Activated CD8-positive, alpha-beta T cell treated with anti-CD3 and anti-CD28 coated beads, Interleukin-2, amount 10 ng/mL, durations not matched to agents 7 days and 5 days (primary cell): ENCODE measurements at regions of chr1 and their contacts with region 1.

Region 1: GRCh38 chr1:235105051-235106043 is 23.3 kb downstream of the TOMM20 start:
- DNase-seq: peak; percentile 46
- ATAC-seq: peak; percentile 32
- H3K4me3 Mint-ChIP-seq: peak overlapping the region; percentile 66
- H3K27ac Mint-ChIP-seq: peak overlapping the region; percentile 79
- H3K4me1 Mint-ChIP-seq: peaks cover 46% of the 10 kb centered on the region
- H3K27me3 Mint-ChIP-seq: no peaks in the 10 kb centered on the region

Region 2: GRCh38 chr1:234486498-234487448 is 618.6 kb before region 1 on chr1:
- CTCF ChIA-PET with region 1: interaction called, 17 read pairs
- POLR2A ChIA-PET with region 1: no interaction called
- DNase-seq: peak; percentile 59
- ATAC-seq: peak; percentile 66
- H3K4me3 Mint-ChIP-seq: no peak overlapping the region
- H3K27ac Mint-ChIP-seq: no peak overlapping the region
- H3K4me1 Mint-ChIP-seq: peaks cover 31% of the 10 kb centered on the region
- H3K27me3 Mint-ChIP-seq: peaks cover 20% of the 10 kb centered on the region

Region 3: DNA sequence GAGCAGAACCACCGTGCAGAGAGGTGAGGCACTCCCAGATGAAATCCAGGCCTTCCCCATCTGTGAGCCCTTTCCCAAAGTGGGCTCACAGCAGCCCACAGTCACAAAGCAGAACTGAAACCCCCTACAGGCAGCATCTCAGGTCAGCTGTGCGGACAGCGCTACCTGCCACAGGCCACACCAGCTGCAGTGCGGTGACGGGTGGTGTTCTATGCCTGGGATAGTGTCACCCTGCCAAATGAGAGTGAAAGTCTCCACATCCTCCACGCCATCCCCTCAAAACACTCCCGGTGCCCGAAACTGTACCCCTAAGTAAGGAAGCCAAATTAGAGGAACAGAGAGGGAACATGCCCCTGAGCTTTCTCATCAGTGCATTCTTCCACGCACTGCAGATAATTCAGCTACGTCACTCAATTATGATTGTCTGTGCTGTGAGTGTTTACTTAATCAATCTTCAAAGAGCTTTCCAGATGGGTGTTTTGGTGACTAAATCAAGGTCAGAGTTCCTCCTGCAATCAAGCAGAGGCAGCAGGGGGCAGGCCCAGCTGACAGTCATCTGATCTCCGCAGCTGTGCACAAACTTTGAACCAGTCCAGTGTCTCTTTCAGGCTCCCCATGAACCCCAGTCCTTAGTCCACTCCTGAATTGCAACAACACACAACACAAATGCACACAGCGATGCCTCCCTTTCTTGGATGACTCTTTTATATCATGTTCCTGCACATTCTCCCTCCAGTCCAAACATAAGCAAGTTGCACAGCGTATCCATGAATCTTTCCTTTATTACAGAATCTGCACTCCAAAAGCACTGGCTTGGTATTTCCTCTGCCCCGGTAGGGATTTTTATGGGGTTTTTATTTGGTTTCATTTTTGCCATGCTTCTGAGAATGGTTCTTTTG is 126.7 kb before region 1 on chr1:
- CTCF ChIA-PET with region 1: no interaction called
- POLR2A ChIA-PET with region 1: no interaction called
- DNase-seq: peak; percentile 54
- ATAC-seq: peak; percentile 9
- H3K4me3 Mint-ChIP-seq: peak overlapping the region; percentile 5
- H3K27ac Mint-ChIP-seq: peak overlapping the region; percentile 91
- H3K4me1 Mint-ChIP-seq: peaks cover 72% of the 10 kb centered on the region
- H3K27me3 Mint-ChIP-seq: no peaks in the 10 kb centered on the region

Region 4: DNA sequence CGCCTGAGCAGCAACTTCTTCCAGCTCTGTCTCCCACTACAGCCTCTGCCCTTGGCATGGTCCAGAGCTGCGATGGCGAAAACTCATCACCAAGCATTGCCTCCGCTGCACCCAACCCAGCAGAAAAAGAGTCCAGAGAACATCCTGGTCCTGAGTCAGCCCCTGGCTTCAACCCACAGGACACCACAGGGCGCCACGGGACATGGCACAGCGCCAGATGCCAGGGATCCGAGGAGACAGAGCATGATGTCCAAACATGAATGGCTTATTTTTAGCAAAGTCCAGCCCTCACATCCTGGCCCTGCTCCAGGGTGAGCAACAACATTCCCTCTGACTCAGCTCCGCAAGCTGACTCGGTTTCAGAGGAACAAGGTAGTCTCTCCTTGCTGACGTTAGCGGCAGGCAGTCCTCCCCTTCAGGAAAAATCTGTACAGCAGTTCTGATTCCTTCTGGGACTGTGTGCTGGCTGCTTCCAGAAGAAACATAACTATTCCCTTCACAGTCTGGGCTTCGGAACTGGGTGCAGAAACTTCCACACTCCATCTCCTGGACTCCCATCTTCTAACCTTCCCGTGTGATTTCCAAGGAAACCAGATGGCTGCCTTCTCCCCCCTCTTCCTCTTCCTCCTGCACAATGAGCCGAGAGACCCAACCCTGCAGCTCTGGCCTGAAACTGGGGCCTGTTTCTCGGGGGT is 108.0 kb before region 1 on chr1:
- CTCF ChIA-PET with region 1: no interaction called
- POLR2A ChIA-PET with region 1: no interaction called
- DNase-seq: no peak
- ATAC-seq: no peak
- H3K4me3 Mint-ChIP-seq: no peak overlapping the region
- H3K27ac Mint-ChIP-seq: no peak overlapping the region
- H3K4me1 Mint-ChIP-seq: peaks cover 4% of the 10 kb centered on the region
- H3K27me3 Mint-ChIP-seq: no peaks in the 10 kb centered on the region

Region 5: DNA sequence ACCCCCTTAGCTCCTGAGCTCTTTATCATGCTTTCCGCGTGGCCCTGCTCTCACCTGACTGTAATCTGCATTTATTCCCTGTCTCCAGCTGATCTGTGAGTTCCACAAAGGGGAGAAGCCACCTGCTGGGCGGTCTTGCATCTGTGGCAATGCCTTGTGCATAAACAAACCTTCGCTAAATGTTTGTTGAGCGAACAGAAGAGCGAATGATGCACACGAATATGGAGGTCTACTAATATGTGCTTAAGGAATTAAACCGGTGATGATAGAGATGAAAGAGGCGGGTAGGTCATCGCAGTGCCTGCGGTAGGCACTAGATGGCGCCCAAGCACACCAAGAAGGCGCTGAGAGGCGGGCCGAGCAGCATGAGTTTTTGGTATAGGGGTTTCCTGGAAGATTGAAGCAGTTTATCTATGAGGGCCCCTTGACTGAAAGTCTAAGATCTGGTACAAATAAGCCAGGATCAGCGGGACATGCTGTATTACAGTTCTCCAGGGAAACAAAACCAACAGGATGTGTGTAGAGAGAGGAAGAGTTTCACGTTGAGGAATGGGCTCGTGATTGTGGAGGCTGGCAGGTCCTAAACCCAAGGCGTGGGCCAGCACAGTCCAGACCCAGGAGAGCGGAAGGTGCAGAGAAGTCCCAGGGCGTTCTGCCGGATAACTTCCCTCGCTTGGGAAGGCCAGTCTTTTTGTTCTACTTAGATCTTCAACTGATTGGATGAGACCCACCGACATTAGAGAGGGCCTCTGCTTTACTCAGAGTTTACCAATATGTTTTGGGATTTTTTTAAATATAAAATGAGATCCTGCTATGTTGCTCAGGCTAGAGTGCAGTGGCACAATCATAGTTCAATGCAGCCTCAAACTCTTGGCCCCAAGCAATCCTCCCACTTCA is 11.4 kb before region 1 on chr1:
- CTCF ChIA-PET with region 1: interaction called, 10 read pairs
- POLR2A ChIA-PET with region 1: no interaction called
- DNase-seq: peak; percentile 89
- ATAC-seq: peak; percentile 92
- H3K4me3 Mint-ChIP-seq: no peak overlapping the region
- H3K27ac Mint-ChIP-seq: peak overlapping the region; percentile 60
- H3K4me1 Mint-ChIP-seq: peaks cover 19% of the 10 kb centered on the region
- H3K27me3 Mint-ChIP-seq: peaks cover 5% of the 10 kb centered on the region

Region 6: DNA sequence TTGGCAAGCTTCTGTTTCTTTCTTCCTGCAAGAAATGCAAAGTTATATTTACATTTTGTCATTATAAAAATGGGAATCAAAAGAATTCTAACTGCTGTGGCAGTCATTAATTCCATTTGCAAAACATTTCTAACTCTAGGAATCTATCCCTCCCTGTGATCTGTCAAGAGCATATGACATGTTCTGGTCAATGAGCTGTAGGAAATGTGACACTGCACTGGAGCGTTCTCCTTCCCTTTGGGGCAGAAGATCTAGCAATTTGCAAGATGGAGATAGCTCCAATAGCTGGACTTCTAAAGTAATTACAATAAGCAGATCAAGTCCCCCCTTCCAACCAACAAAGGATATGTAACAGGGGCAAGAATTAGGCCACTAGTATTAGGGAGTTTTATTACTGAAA is 17.0 kb after region 1 on chr1:
- CTCF ChIA-PET with region 1: interaction called, 33 read pairs
- POLR2A ChIA-PET with region 1: interaction called, 3 read pairs
- DNase-seq: no peak
- ATAC-seq: no peak
- H3K4me3 Mint-ChIP-seq: no peak overlapping the region
- H3K27ac Mint-ChIP-seq: no peak overlapping the region
- H3K4me1 Mint-ChIP-seq: peaks cover 43% of the 10 kb centered on the region
- H3K27me3 Mint-ChIP-seq: no peaks in the 10 kb centered on the region